ENCODE measurements at regions of chr17 and their contacts with region 1.

Region 1: DNA sequence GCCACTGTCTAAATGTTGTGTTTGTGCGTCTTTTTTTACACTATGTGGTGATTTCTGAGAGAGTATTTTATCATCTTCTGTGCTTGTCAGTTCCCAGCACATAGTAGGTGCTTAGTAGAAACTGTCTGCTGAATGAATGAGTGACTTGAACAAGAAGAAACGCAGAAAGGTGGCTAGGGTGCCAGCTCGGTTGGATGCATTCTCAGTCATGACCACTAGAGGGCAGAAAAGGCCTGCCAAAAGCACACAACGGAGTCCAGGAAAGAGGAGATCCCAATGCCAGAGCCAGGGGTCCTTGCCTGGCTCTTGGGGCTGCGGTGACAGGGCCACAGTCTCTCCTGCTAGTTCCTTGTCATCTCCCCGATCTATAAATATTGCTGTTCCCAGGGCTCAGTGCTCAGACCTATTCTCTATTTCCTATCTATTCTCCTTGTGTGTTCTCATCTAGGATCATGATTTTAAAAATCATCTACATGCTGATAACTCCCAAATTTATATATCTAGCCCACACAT is 57.3 kb upstream of the CCL1 start:
- DNase-seq: peak; percentile 68 to 77
- H3K4me3 ChIP-seq: no peak overlapping the region
- H3K4me3 Mint-ChIP-seq: no peak overlapping the region
- H3K27ac Mint-ChIP-seq: no peak overlapping the region
- H3K4me1 ChIP-seq: no peaks in the 10 kb centered on the region
- H3K4me1 Mint-ChIP-seq: no peaks in the 10 kb centered on the region
- H3K27me3 ChIP-seq: peaks cover 3% of the 10 kb centered on the region
- H3K27me3 Mint-ChIP-seq: peaks cover 21% of the 10 kb centered on the region
- CTCF ChIP-seq: peak; percentile 91 to 96

Region 2: DNA sequence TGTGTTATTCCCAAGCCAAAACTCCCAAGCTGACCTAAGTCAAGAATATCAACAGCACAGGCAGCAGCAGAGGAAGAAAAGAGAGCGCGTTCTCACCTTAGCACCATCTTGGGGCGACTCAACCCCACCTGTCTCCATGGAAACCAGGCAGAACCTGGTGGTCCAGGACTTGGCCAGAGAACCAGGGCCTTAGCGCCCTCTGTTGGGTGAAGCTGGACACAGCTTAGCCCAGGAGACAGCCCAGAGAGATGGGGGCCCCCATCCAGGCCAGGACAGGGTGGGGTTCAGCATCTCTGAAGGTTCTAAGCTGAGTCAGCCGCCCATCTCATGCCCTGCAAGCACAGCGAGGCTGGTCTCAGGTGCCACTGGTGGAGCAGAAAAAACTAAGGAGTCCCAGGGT is 99.0 kb after region 1 on chr17:
- CTCF ChIA-PET with region 1: interaction called, 4 read pairs
- POLR2A ChIA-PET with region 1: no interaction called
- intact Hi-C with region 1: loop called (anchors 5 kb)
- DNase-seq: peak in 1 of 2 experiments; percentile 25
- H3K4me3 ChIP-seq: no peak overlapping the region
- H3K4me3 Mint-ChIP-seq: no peak overlapping the region
- H3K27ac Mint-ChIP-seq: no peak overlapping the region
- H3K4me1 ChIP-seq: no peaks in the 10 kb centered on the region
- H3K4me1 Mint-ChIP-seq: no peaks in the 10 kb centered on the region
- H3K27me3 ChIP-seq: peaks cover 2% of the 10 kb centered on the region
- H3K27me3 Mint-ChIP-seq: peaks cover 10% of the 10 kb centered on the region
- CTCF ChIP-seq: peak; percentile 41 to 58

Region 3: DNA sequence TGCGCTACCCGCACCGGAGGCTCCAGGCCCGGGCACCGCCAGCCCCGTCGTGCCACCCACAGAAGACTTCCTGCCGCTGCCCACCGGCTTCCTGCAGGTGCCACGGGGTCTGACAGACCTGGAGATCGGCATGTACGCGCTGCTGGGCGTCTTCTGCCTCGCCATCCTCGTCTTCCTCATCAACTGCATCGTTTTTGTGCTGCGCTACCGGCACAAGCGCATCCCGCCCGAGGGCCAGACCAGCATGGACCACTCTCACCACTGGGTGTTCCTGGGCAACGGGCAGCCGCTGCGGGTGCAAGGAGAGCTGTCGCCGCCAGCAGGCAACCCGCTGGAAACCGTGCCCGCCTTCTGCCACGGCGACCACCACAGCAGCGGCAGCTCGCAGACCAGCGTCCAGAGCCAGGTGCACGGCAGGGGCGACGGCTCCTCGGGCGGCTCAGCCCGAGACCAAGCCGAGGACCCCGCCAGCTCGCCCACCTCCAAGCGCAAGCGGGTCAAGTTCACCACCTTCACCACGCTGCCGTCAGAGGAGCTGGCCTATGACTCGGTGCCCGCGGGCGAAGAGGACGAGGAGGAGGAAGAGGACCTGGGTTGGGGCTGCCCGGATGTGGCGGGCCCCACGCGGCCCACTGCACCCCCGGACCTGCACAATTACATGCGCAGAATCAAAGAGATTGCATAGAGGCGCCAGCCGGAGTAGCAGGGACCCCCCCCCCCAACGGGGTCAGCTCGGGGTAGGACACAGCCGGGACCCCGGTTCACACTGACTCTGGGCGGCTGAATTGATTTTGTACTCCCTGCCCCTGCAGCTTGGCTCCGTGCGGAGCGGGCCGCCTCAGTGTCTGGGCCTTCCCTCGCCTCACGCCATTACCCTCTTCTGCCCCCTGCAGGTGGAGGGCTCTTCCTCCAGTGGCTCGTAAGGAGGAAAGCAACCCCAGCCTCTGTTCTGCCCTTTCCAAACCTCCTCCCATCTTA is 217.5 kb after region 1 on chr17:
- CTCF ChIA-PET with region 1: no interaction called
- POLR2A ChIA-PET with region 1: no interaction called
- intact Hi-C with region 1: loop called (anchors 1 kb)
- DNase-seq: peak; percentile 70 to 84
- H3K4me3 ChIP-seq: no peak overlapping the region
- H3K4me3 Mint-ChIP-seq: no peak overlapping the region
- H3K27ac Mint-ChIP-seq: no peak overlapping the region
- H3K4me1 ChIP-seq: peaks cover 7% of the 10 kb centered on the region; the same call in 1 of the 2 replicates
- H3K4me1 Mint-ChIP-seq: peaks cover 13% of the 10 kb centered on the region
- H3K27me3 ChIP-seq: no peaks in the 10 kb centered on the region; the same call in 1 of the 2 replicates
- H3K27me3 Mint-ChIP-seq: peaks cover 24% of the 10 kb centered on the region
- CTCF ChIP-seq: peak; percentile 84 to 94

Region 4: GRCh38 chr17:34892461-34893249 is 472.3 kb after region 1 on chr17:
- CTCF ChIA-PET with region 1: no interaction called
- POLR2A ChIA-PET with region 1: no interaction called
- intact Hi-C with region 1: loop called (anchors 5 kb)
- DNase-seq: peak in 1 of 2 experiments; percentile 36
- H3K4me3 ChIP-seq: no peak overlapping the region
- H3K4me3 Mint-ChIP-seq: no peak overlapping the region
- H3K27ac Mint-ChIP-seq: no peak overlapping the region
- H3K4me1 ChIP-seq: no peaks in the 10 kb centered on the region
- H3K4me1 Mint-ChIP-seq: no peaks in the 10 kb centered on the region
- H3K27me3 ChIP-seq: no peaks in the 10 kb centered on the region; the same call in none of the 2 replicates
- H3K27me3 Mint-ChIP-seq: peaks cover 20% of the 10 kb centered on the region
- CTCF ChIP-seq: peak; percentile 39 to 62

Region 5: DNA sequence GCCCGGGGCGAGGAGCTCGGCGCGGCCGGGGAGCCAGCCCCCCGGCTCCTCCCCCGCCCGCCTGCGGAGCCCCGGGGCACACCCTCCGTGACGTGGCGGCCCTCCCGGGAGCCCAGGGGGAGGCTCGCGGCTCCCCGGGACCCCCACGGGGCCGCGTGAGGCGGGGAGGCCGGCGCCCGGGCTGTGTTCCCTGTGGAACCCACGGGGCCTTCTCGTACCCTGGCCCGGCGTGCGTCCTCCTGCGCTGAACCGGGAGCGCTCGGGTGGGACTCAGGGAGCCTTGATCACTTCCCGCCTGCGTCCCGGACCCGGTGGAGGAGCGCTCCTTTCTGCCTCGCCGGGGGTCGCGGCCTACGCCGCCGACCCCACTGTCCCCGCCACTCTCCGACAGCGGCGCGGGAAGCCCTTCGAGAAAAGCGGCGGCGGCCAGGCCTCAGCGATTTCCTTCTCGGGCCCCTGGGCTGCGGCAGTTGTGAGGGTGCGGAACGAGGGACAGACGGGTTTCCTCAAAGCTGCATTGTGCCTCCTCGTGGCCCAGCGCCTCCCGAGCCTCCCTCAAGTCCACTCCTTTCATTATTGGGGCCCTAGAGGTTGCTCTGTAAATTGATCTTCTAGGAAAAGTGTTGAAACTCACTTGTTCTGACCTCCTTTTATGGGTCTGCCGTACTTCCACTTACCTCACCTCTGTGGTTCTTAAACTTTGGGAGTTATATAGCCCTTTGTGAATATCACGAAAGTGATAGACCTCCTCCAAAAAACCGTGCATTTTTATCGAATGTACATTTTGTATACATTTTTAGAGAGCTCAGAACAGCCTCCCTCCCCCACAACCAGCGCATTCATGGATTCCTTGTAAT is 560.6 kb after region 1 on chr17:
- CTCF ChIA-PET with region 1: no interaction called
- POLR2A ChIA-PET with region 1: no interaction called
- intact Hi-C with region 1: loop called (anchors 2 kb)
- DNase-seq: peak; percentile 85 to 86
- H3K4me3 ChIP-seq: peak overlapping the region; percentile 75
- H3K4me3 Mint-ChIP-seq: peak overlapping the region; percentile 85
- H3K27ac Mint-ChIP-seq: peak overlapping the region; percentile 93
- H3K4me1 ChIP-seq: 0 out of 2 replicates have a peak, but pooled peaks cover 10% of the 10 kb centered on the region
- H3K4me1 Mint-ChIP-seq: peaks cover 10% of the 10 kb centered on the region
- H3K27me3 ChIP-seq: no peaks in the 10 kb centered on the region
- H3K27me3 Mint-ChIP-seq: no peaks in the 10 kb centered on the region
- CTCF ChIP-seq: peak; percentile 46 to 71